Naive thymus-derived CD4-positive, alpha-beta T cell (primary cell): ENCODE measurements at regions of chr5 and their contacts with region 1.

Region 1: GRCh38 chr5:177006265-177006972 is at the start of gene UIMC1:
- DNase-seq: peak; percentile 84 to 96 (median 89)
- ATAC-seq: peak; percentile 96
- H3K4me3 ChIP-seq: peak within 1 kb of the TSS; percentile 75
- H3K4me3 Mint-ChIP-seq: peak within 1 kb of the TSS; percentile 90 to 96 (median 94)
- H3K27ac ChIP-seq: peak within 1 kb of the TSS; percentile 85
- H3K27ac Mint-ChIP-seq: peak within 1 kb of the TSS; percentile 87 to 97 (median 93)
- H3K4me1 ChIP-seq: peaks cover 18% of the 10 kb centered on the region in 2 donors
- H3K4me1 Mint-ChIP-seq: peaks cover 14 to 35% (median 28%) of the 10 kb centered on the region in 7 donors
- H3K27me3 ChIP-seq: no peaks in the 10 kb centered on the region
- H3K27me3 Mint-ChIP-seq: no peaks in the 10 kb centered on the region
- total RNA-seq, gene UIMC1: 52.9 to 60.8 (median 59.9) TPM

Region 2: DNA sequence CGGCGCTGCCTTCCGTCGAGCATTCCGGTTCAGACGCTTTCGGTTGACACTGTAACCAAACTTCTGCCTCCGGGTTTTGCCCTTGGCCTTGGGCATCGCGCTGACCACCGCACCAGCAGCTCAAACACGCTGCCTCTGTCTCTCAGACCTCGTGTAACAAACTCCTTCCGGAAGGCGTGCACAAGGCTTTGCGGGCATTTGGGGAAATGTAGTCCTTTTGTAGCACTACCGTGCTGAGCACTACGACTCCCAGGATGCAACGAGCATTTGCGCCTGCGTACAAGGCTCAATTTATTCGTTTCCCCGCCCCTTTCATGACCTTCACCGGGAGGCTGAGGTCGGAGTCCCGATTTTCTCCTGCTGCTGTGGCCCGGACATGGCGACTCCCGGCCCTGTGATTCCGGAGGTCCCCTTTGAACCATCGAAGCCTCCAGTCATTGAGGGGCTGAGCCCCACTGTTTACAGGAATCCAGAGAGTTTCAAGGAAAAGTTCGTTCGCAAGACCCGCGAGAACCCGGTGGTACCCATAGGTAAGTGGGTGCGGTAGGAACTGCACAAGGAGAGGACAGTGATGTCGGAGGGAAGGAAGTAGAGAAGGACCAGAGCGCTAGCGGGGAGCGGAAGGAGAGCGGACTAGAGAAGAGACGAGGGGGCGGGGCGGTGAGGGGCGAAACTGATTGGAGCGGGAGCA is 617.8 kb before region 1 on chr5 and contains the starts of genes HIGD2A and NOP16:
- CTCF ChIA-PET with region 1: no interaction called
- POLR2A ChIA-PET with region 1: no interaction called
- intact Hi-C with region 1: loop called (anchors 2 kb)
- DNase-seq: peak; percentile 89 to 99 (median 98)
- ATAC-seq: peak; percentile 95
- H3K4me3 ChIP-seq: peak within 1 kb of the TSS; percentile 95
- H3K4me3 Mint-ChIP-seq: peak within 1 kb of the TSS; percentile 94 to 100 (median 99)
- H3K27ac ChIP-seq: peak within 1 kb of the TSS; percentile 93
- H3K27ac Mint-ChIP-seq: peak within 1 kb of the TSS; percentile 91 to 100 (median 99)
- H3K4me1 ChIP-seq: peaks cover 18% of the 10 kb centered on the region in 2 donors
- H3K4me1 Mint-ChIP-seq: peaks cover 14 to 42% (median 35%) of the 10 kb centered on the region in 7 donors
- H3K27me3 ChIP-seq: no peaks in the 10 kb centered on the region
- H3K27me3 Mint-ChIP-seq: no peaks in the 10 kb centered on the region
- total RNA-seq, gene HIGD2A: 86.8 to 124 (median 112) TPM
- total RNA-seq, gene NOP16: 12.8 to 35.3 (median 22.2) TPM

Region 3: DNA sequence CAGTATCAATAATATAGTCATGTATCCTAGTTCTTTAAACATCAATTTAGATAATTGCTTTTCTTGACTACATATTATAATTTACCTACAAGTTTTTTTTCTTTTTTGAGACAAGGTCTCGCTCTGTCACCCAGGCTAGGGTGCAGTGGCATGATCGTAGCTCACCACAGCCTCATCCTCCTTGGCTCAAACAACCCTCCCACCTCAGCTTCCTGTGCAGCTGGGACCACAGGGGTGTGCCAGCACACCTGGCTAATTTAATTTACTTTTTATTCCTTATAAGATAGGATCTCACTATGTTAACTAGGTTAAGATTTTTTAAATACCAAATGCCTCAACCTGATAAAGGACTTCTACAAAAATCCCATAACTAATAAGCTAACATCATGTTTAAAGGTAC is 20.9 kb before region 1 on chr5:
- CTCF ChIA-PET with region 1: no interaction called
- POLR2A ChIA-PET with region 1: interaction called, 8 read pairs
- intact Hi-C with region 1: loop called in 1 of 2 experiments (anchors 2 kb)
- DNase-seq: peak in 7 of 9 donors; percentile 30 to 58 (median 54)
- ATAC-seq: peak; percentile 87
- H3K4me3 ChIP-seq: no peak overlapping the region
- H3K4me3 Mint-ChIP-seq: peak overlapping the region in 9 of 10 donors; percentile 17 to 69 (median 55)
- H3K27ac ChIP-seq: peak overlapping the region; percentile 35
- H3K27ac Mint-ChIP-seq: peak overlapping the region; percentile 60 to 92 (median 83)
- H3K4me1 ChIP-seq: peaks cover 6 to 12% of the 10 kb centered on the region in 2 donors
- H3K4me1 Mint-ChIP-seq: peaks cover 18 to 38% (median 26%) of the 10 kb centered on the region in 7 donors
- H3K27me3 ChIP-seq: no peaks in the 10 kb centered on the region
- H3K27me3 Mint-ChIP-seq: no peaks in the 10 kb centered on the region

Region 4: GRCh38 chr5:176995896-176996754 is 10.3 kb before region 1 on chr5:
- CTCF ChIA-PET with region 1: no interaction called
- POLR2A ChIA-PET with region 1: interaction called, 3 read pairs
- intact Hi-C with region 1: loop called in 1 of 2 experiments (anchors 1 kb)
- DNase-seq: no peak
- ATAC-seq: peak; percentile 62
- H3K4me3 ChIP-seq: no peak overlapping the region
- H3K4me3 Mint-ChIP-seq: peak overlapping the region in 2 of 10 donors; percentile 4 to 7
- H3K27ac ChIP-seq: no peak overlapping the region
- H3K27ac Mint-ChIP-seq: peak overlapping the region in 2 of 9 donors; percentile 38 to 84
- H3K4me1 ChIP-seq: peaks cover 0 to 5% of the 10 kb centered on the region in 2 donors
- H3K4me1 Mint-ChIP-seq: peaks cover 30 to 62% (median 42%) of the 10 kb centered on the region in 7 donors
- H3K27me3 ChIP-seq: no peaks in the 10 kb centered on the region
- H3K27me3 Mint-ChIP-seq: no peaks in the 10 kb centered on the region

Region 5: GRCh38 chr5:177022384-177023308 is 16.2 kb after region 1 on chr5 and contains the start of gene ZNF346:
- CTCF ChIA-PET with region 1: interaction called, 8 read pairs
- POLR2A ChIA-PET with region 1: interaction called, 9 read pairs
- intact Hi-C with region 1: loop called (anchors 1 kb)
- DNase-seq: peak; percentile 80 to 93 (median 91)
- ATAC-seq: peak; percentile 98
- H3K4me3 ChIP-seq: peak within 1 kb of the TSS; percentile 62
- H3K4me3 Mint-ChIP-seq: peak within 1 kb of the TSS; percentile 97 to 100 (median 99)
- H3K27ac ChIP-seq: peak within 1 kb of the TSS; percentile 91
- H3K27ac Mint-ChIP-seq: peak within 1 kb of the TSS; percentile 95 to 99 (median 98)
- H3K4me1 ChIP-seq: peaks cover 15 to 16% of the 10 kb centered on the region in 2 donors
- H3K4me1 Mint-ChIP-seq: peaks cover 28 to 57% (median 45%) of the 10 kb centered on the region in 7 donors
- H3K27me3 ChIP-seq: no peaks in the 10 kb centered on the region
- H3K27me3 Mint-ChIP-seq: no peaks in the 10 kb centered on the region
- total RNA-seq, gene ZNF346: 18.1 to 28.2 (median 24.0) TPM

Region 6: DNA sequence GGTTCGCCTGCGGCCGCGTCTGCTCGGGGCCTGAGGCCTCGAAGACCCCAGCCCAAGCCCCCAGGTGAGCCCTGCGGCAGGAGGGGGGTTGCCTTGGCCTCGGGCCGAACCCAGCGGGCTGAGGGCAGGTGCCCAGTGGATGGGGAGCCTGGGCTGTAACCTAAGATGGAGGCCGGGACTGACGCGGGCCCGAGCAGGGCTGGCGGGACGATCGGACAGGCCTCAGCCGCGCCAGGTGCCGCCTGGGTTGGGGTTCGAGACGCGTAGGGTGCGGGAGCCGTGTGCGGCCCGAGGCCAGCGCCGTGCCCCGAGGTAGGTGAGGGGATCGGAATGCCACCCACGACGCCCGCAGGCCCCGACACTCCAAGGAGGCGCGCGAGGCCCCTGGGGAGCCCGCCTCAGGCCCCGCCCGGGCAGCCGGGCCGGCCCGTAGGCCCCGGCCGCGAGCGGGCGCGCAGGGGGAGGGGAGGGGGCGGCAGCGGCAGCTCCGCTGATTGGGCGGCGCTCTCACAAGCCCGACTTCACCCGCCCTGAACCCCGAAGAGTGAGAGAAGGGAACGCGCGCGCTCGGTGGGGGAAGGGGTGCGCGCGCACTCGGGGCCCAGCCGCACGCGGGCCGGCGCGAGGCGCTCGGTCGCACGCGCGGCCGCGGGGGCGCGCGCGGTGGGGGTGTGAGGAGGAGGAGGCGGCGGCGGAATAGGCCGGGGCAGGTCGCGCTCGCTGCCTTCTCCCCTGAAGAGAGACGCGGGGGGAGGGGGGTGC is 126.9 kb after region 1 on chr5 and contains the start of gene NSD1:
- CTCF ChIA-PET with region 1: no interaction called
- POLR2A ChIA-PET with region 1: interaction called, 3 read pairs
- intact Hi-C with region 1: loop called (anchors 1 kb)
- DNase-seq: peak; percentile 86 to 94 (median 93)
- ATAC-seq: peak; percentile 89
- H3K4me3 ChIP-seq: peak within 1 kb of the TSS; percentile 61
- H3K4me3 Mint-ChIP-seq: peak within 1 kb of the TSS; percentile 60 to 88 (median 85)
- H3K27ac ChIP-seq: peak within 1 kb of the TSS; percentile 80
- H3K27ac Mint-ChIP-seq: peak within 1 kb of the TSS; percentile 48 to 95 (median 89)
- H3K4me1 ChIP-seq: peaks cover 47 to 57% of the 10 kb centered on the region in 2 donors
- H3K4me1 Mint-ChIP-seq: peaks cover 34 to 72% (median 65%) of the 10 kb centered on the region in 7 donors
- H3K27me3 ChIP-seq: no peaks in the 10 kb centered on the region
- H3K27me3 Mint-ChIP-seq: no peaks in the 10 kb centered on the region
- total RNA-seq, gene NSD1: 105 to 126 (median 117) TPM

Region 7: GRCh38 chr5:177303121-177303924 is 296.9 kb after region 1 on chr5 and contains the starts of genes PRELID1 and RAB24:
- CTCF ChIA-PET with region 1: no interaction called
- POLR2A ChIA-PET with region 1: no interaction called
- intact Hi-C with region 1: loop called in 1 of 2 experiments (anchors 5 kb)
- DNase-seq: peak; percentile 78 to 95 (median 85)
- ATAC-seq: peak; percentile 80
- H3K4me3 ChIP-seq: peak within 1 kb of the TSS; percentile 98
- H3K4me3 Mint-ChIP-seq: peak within 1 kb of the TSS; percentile 84 to 95 (median 88)
- H3K27ac ChIP-seq: peak within 1 kb of the TSS; percentile 78
- H3K27ac Mint-ChIP-seq: peak within 1 kb of the TSS; percentile 73 to 96 (median 90)
- H3K4me1 ChIP-seq: peaks cover 46 to 49% of the 10 kb centered on the region in 2 donors
- H3K4me1 Mint-ChIP-seq: peaks cover 52 to 76% (median 74%) of the 10 kb centered on the region in 7 donors
- H3K27me3 ChIP-seq: no peaks in the 10 kb centered on the region
- H3K27me3 Mint-ChIP-seq: no peaks in the 10 kb centered on the region
- total RNA-seq, gene PRELID1: 49.0 to 172 (median 57.2) TPM
- total RNA-seq, gene RAB24: 18.0 to 47.5 (median 24.3) TPM